ENCODE measurements at regions of chr2 and their contacts with region 1.

Region 1: GRCh38 chr2:50408936-50409335 is 623.0 kb downstream of the NRXN1 start:
- DNase-seq: no peak
- H3K4me3 ChIP-seq: no peak overlapping the region
- H3K27ac ChIP-seq: no peak overlapping the region
- H3K4me1 ChIP-seq: no peaks in the 10 kb centered on the region
- H3K27me3 ChIP-seq: peaks cover 3% of the 10 kb centered on the region
- CTCF ChIP-seq: no peak

Region 2: GRCh38 chr2:48450936-48451602 is 1957.9 kb before region 1 on chr2:
- CTCF ChIA-PET with region 1: no interaction called
- POLR2A ChIA-PET with region 1: interaction called, 13 read pairs
- intact Hi-C with region 1: no loop called
- DNase-seq: no peak
- H3K4me3 ChIP-seq: no peak overlapping the region
- H3K27ac ChIP-seq: no peak overlapping the region
- H3K4me1 ChIP-seq: peaks cover 3% of the 10 kb centered on the region
- H3K27me3 ChIP-seq: no peaks in the 10 kb centered on the region
- CTCF ChIP-seq: no peak

Measured in A673 (cell line).